ENCODE measurements at regions of chr7 and their contacts with region 1.

Region 1: GRCh38 chr7:131513245-131514061 is 43.0 kb downstream of the PODXL start:
- DNase-seq: no peak
- ATAC-seq: peak; percentile 100
- H3K4me3 ChIP-seq: no peak overlapping the region
- H3K27ac ChIP-seq: no peak overlapping the region
- H3K4me1 ChIP-seq: no peaks in the 10 kb centered on the region
- H3K27me3 ChIP-seq: no peaks in the 10 kb centered on the region
- CTCF ChIP-seq: peak; percentile 93 to 97 (median 97); a peak in 5 of 6 replicates
- EP300 ChIP-seq: no peak
- POLR2A ChIP-seq: no peak
- RAD21 ChIP-seq: peak; percentile 72

Region 2: DNA sequence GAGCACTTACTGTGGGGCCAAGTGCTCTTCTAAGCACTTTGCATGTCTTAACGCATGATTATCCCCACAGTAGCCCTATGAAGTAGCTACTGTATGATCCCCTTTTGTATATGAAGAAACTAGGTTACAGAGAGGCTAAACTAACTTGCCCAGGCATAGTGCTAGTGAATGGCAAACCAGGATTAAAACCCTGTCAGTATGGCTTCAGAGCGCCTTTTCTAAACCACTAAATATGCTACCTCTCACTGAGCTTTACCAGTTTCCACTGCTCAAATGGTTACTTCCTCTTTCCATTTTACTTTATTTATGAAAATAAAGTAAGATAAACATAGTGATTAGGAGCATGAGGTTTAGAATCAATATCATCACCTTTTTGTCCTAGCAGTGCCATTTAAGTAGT is 30.7 kb before region 1 on chr7:
- CTCF ChIA-PET with region 1: interaction called, 14 read pairs
- POLR2A ChIA-PET with region 1: no interaction called
- RAD21 ChIA-PET with region 1: no interaction called
- SMC1A ChIA-PET with region 1: no interaction called
- in situ Hi-C with region 1: no loop called
- intact Hi-C with region 1: no loop called
- DNase-seq: peak; percentile 15
- ATAC-seq: peak; percentile 88
- H3K4me3 ChIP-seq: no peak overlapping the region
- H3K27ac ChIP-seq: peak overlapping the region; percentile 58
- H3K4me1 ChIP-seq: peaks cover 18% of the 10 kb centered on the region
- H3K27me3 ChIP-seq: no peaks in the 10 kb centered on the region
- CTCF ChIP-seq: no peak
- EP300 ChIP-seq: no peak
- POLR2A ChIP-seq: no peak
- RAD21 ChIP-seq: no peak

Region 3: DNA sequence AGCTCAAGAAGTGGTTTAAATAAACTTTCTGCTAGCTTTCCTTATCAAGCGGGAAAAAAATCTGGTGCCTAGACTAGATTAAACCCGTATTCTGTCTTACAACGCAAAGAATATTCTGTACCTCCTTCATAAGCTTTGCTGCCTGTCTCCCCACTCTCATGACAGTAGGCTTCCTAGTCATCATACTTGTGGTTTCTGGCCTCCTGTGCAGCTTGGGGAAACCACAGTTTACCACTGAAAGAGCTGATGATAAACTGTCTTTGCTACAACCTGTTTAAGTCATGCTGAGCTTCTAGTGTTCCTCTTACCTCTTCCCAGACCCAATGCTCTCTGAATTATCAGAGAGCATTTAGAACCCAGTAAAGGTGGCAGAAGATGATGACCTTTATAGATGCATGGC is 12.0 kb before region 1 on chr7:
- CTCF ChIA-PET with region 1: interaction called, 44 read pairs
- POLR2A ChIA-PET with region 1: no interaction called
- RAD21 ChIA-PET with region 1: interaction called, 5 read pairs
- SMC1A ChIA-PET with region 1: interaction called, 5 read pairs
- in situ Hi-C with region 1: no loop called
- intact Hi-C with region 1: no loop called
- DNase-seq: no peak
- ATAC-seq: peak; percentile 81
- H3K4me3 ChIP-seq: no peak overlapping the region
- H3K27ac ChIP-seq: no peak overlapping the region
- H3K4me1 ChIP-seq: peaks cover 6% of the 10 kb centered on the region; the same call in 1 of the 2 replicates
- H3K27me3 ChIP-seq: no peaks in the 10 kb centered on the region
- CTCF ChIP-seq: no peak
- EP300 ChIP-seq: no peak
- POLR2A ChIP-seq: no peak
- RAD21 ChIP-seq: no peak

Region 4: DNA sequence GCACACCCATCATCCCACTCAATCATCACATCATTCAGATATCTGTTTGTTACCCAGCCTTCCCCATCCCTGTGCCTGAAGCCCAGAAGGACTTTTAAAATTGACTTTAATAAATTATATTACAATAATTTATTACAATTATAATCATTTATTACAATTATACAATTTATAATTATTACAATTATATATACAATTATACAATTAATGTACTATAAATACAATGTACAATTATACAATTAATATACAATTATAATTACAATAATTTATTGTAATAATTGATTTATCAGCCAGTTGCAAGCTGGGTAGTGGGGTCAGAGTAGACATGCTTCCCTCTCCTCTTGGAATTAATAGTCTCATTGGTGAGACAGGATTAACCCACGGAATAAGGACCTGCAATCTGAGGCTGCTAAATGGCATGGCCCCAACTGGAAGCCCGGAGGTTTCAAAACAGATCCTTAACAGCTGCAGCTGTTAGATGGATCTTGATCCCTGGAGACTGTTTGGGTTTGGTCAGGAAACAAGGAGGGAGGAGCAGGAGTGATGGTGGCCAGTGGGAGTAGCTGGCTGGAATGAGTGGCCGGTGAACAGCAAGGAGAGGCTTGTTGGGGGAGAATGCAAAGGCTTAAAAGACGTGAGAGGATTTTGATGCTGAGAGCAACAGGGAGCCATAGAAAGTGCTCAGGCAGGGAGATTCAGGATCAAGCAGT is 445.8 kb after region 1 on chr7:
- CTCF ChIA-PET with region 1: no interaction called
- POLR2A ChIA-PET with region 1: no interaction called
- RAD21 ChIA-PET with region 1: no interaction called
- SMC1A ChIA-PET with region 1: no interaction called
- in situ Hi-C with region 1: no loop called
- intact Hi-C with region 1: no loop called
- DNase-seq: no peak
- ATAC-seq: no peak
- H3K4me3 ChIP-seq: no peak overlapping the region
- H3K27ac ChIP-seq: no peak overlapping the region
- H3K4me1 ChIP-seq: no peaks in the 10 kb centered on the region
- H3K27me3 ChIP-seq: no peaks in the 10 kb centered on the region
- CTCF ChIP-seq: no peak
- EP300 ChIP-seq: no peak
- POLR2A ChIP-seq: no peak
- RAD21 ChIP-seq: no peak

Measured in GM12878 (cell line).